ENCODE measurements at regions of chr5 and their contacts with region 1.

Region 1: DNA sequence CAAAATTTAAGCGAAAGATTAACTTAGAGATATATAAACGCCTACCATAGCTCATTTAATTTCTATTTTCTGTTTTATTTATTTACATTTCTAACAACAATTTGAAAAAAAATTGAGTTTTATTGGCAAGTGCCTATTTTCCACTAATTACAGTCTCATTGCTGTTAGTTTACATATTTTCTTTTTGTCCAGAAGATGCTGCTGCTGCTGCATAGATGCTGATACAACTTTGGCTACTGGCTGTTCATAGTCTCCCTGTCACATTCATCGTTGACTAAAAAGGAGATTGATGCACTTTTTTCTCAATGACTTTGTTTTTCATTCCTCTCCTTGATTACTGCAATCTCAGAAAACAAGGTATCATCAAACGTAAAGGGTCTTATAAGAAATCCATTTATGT is 235.4 kb downstream of the CDH9 start:
- DNase-seq: no peak
- H3K4me3 Mint-ChIP-seq: no peak overlapping the region
- H3K27ac Mint-ChIP-seq: no peak overlapping the region
- H3K4me1 Mint-ChIP-seq: no peaks in the 10 kb centered on the region
- H3K27me3 Mint-ChIP-seq: no peaks in the 10 kb centered on the region

Region 2: DNA sequence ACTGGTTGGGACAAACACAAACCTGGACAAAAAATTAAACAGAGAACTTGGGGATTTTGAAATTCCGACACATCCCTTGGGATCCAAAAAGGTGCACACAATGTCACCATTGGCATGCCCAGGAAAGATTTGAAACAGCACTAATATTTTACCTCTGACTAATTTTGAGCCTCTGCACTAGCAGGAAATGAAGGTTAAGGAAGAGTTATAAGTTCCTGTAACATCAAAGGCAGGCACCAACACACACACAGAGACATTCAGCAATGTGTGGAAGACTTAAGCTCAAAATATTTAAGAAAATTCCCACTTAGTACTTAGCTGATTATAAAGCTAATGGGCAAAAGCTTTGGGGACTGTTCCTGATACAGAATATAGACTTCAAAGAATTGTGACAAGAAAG is 11.5 kb before region 1 on chr5:
- intact Hi-C with region 1: loop called (anchors 1 kb)
- DNase-seq: no peak
- H3K4me3 Mint-ChIP-seq: no peak overlapping the region
- H3K27ac Mint-ChIP-seq: no peak overlapping the region
- H3K4me1 Mint-ChIP-seq: no peaks in the 10 kb centered on the region
- H3K27me3 Mint-ChIP-seq: no peaks in the 10 kb centered on the region